ENCODE measurements at regions of chr13 and their contacts with region 1.

Region 1: GRCh38 chr13:112689303-112690165 is at the start of gene ATP11A:
- DNase-seq: peak; percentile 93 to 97 (median 96)
- ATAC-seq: peak; percentile 84 to 93 (median 90)
- H3K4me3 ChIP-seq: peak within 1 kb of the TSS; percentile 71 to 99 (median 95)
- H3K27ac ChIP-seq: peak within 1 kb of the TSS; percentile 89 to 98 (median 96)
- H3K4me1 ChIP-seq: peaks cover 3 to 46% (median 33%) of the 10 kb centered on the region in 12 donors
- H3K27me3 ChIP-seq: no peaks in the 10 kb centered on the region
- CTCF ChIP-seq: peak in 3 of 12 donors; percentile 28 to 31 (median 30)
- POLR2A ChIP-seq: peak; percentile 87 to 98
- total RNA-seq, gene ATP11A: 51.4 to 146 (median 110) TPM

Region 2: DNA sequence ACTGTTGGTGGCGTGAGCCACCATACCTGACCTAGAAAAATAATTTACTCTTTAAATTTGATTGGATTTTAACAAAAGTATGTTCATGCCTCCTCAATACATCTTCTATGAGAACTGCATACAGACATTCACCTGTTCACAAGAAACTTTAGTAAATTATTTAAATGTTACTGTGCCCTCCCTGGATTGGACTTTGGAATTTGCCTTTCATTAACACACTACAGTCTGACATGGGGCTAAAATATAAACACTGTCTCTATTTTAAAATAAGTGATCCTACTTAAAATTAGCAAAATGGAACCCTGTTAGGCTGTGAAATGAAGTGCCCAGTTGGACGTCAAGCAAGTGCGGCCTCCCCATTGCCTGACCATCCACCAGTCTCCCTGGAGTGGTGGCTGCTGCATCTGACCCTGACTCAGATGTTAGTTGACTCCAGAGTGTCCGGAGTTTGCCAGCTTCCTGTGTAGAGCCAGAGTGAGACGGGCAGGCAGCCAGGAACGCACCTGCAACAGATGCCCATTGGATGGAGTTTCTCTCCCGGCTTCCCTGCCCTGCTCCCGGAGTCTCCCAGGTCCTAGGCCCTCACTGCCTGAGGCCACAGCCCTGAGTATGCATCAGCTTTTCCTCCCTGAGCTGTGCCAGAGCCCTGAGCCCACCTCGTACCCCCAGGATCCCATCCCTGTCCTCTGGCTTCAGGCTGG is 45.6 kb before region 1 on chr13:
- intact Hi-C with region 1: loop called in 7 of 10 experiments (anchors 2 to 5 kb)
- DNase-seq: no peak
- ATAC-seq: no peak
- H3K4me3 ChIP-seq: no peak overlapping the region
- H3K27ac ChIP-seq: no peak overlapping the region
- H3K4me1 ChIP-seq: peaks cover 0 to 18% (median 0%) of the 10 kb centered on the region in 12 donors
- H3K27me3 ChIP-seq: peaks cover 0 to 16% (median 9%) of the 10 kb centered on the region in 9 donors
- CTCF ChIP-seq: no peak
- POLR2A ChIP-seq: no peak

Region 3: DNA sequence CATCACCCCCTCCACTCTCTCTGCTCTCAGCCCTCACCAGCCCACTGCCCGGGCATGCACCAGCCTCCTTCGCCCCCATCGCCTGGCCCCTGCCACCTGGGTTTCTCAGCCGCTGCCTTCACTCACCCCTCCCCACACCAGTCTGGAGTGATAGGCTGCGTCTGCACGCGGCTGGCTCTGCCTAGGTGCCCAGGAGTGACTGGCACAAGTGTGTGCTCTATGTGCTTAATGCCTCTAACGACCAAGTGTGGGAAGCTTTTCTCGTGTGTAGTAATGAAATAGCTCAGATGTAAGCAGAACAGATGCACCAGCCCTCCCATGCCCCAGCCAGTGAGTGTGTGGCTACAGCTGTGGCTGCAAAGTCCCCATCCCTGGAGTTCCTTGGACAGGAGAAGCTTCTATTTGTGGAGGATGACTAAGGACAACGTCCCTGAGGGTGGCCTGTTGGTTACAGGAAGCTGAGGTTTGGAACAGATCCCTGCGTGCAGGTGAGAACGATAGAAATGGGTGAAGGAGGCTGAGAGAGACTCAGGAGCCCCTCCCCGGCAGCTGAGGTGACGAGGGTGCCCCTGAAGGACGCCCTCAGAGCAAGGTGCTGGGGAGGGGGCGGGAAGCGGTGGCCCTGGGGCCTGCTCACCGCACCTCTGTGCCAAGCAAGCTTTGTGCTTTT is 35.9 kb after region 1 on chr13:
- intact Hi-C with region 1: loop called in 5 of 10 experiments (anchors 1 to 5 kb)
- DNase-seq: peak in 1 of 5 donors; percentile 77
- ATAC-seq: peak; percentile 29 to 56 (median 44)
- H3K4me3 ChIP-seq: peak overlapping the region in 5 of 12 donors; percentile 9 to 38 (median 15)
- H3K27ac ChIP-seq: peak overlapping the region; percentile 22 to 95 (median 79)
- H3K4me1 ChIP-seq: peaks cover 5 to 91% (median 49%) of the 10 kb centered on the region in 12 donors
- H3K27me3 ChIP-seq: no peaks in the 10 kb centered on the region
- CTCF ChIP-seq: no peak
- POLR2A ChIP-seq: peak in 1 of 2 donors; percentile 55

Region 4: GRCh38 chr13:112752711-112753541 is 63.4 kb after region 1 on chr13:
- intact Hi-C with region 1: loop called in 1 of 10 experiments (anchors 10 kb)
- DNase-seq: no peak
- ATAC-seq: peak; percentile 21 to 45 (median 28)
- H3K4me3 ChIP-seq: no peak overlapping the region
- H3K27ac ChIP-seq: no peak overlapping the region
- H3K4me1 ChIP-seq: peaks cover 0 to 26% (median 10%) of the 10 kb centered on the region in 12 donors
- H3K27me3 ChIP-seq: no peaks in the 10 kb centered on the region
- CTCF ChIP-seq: no peak
- POLR2A ChIP-seq: no peak

Region 5: DNA sequence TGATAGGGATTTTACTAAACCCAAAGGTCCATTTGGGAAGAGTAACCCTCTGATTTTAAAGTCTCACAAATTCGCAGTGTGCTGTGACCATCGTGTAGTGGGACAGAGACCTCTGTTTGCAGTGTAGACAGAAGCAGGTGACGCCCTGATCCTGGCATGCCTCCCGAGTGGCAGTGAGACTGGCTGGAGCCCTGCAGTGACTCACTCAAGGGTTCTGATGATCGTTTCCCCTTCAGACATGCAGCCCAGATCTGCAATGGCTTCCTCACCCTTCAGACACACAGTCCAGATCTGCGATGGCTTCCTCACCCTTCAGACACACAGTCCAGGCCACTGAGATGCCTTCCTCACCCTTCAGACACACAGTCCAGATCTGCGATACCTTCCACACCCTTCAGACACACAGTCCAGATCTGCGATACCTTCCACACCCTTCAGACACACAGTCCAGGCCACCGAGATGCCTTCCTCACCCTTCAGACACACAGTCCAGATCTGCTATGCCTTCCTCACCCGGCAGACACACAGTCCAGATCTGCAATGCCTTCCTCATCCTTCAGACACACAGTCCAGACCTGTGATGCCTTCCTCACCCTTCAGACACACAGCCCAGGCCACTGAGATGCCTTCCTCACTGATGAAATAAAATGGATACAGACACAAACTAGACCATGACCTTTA is 125.5 kb after region 1 on chr13:
- intact Hi-C with region 1: loop called in 2 of 10 experiments (anchors 10 kb)
- DNase-seq: peak in 3 of 5 donors; percentile 3 to 82 (median 65)
- ATAC-seq: peak in 3 of 4 donors; percentile 77 to 87 (median 80)
- H3K4me3 ChIP-seq: no peak overlapping the region
- H3K27ac ChIP-seq: peak overlapping the region in 1 of 12 donors; percentile 47
- H3K4me1 ChIP-seq: peaks cover 0 to 18% (median 0%) of the 10 kb centered on the region in 12 donors
- H3K27me3 ChIP-seq: no peaks in the 10 kb centered on the region
- CTCF ChIP-seq: no peak
- POLR2A ChIP-seq: no peak